Activated CD4-positive, alpha-beta T cell treated with anti-CD3 and anti-CD28 coated beads for 36 hours (primary cell): ENCODE measurements at regions of chr6 and their contacts with region 1.

Region 1: DNA sequence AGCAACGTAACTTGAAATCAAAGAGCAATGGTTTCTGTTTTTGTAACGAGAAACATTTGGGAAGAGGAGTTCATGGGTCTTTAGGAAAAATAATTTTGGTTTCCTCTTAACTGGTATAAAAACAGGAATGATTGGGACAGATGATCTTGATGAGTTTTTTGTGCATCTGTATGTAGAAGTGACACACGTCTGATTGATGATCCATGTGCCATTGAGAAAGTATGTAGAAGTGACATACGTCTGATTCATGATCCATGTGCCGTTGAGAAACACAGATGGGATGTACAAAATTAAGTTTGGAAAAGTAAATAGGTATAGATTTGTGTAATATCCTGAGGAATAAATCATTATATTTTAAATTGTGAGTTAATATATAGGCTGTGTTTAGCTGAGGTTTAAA is 2.1 kb downstream of the KIAA1586 start:
- DNase-seq: no peak
- ATAC-seq: no peak
- H3K4me3 Mint-ChIP-seq: peak overlapping the region; percentile 63
- H3K27ac Mint-ChIP-seq: peak overlapping the region; percentile 40
- H3K4me1 Mint-ChIP-seq: peaks cover 28% of the 10 kb centered on the region
- H3K27me3 Mint-ChIP-seq: peaks cover 9% of the 10 kb centered on the region

Region 2: GRCh38 chr6:57089687-57090460 is 41.3 kb after region 1 on chr6 and contains the start of gene ZNF451:
- CTCF ChIA-PET with region 1: no interaction called
- POLR2A ChIA-PET with region 1: no interaction called
- intact Hi-C with region 1: loop called (anchors 1 kb)
- DNase-seq: peak; percentile 98
- ATAC-seq: peak; percentile 95
- H3K4me3 Mint-ChIP-seq: peak within 1 kb of the TSS; percentile 73
- H3K27ac Mint-ChIP-seq: peak within 1 kb of the TSS; percentile 82
- H3K4me1 Mint-ChIP-seq: peaks cover 32% of the 10 kb centered on the region
- H3K27me3 Mint-ChIP-seq: no peaks in the 10 kb centered on the region
- total RNA-seq, gene ZNF451: 46.8 to 60.3 TPM

Region 3: GRCh38 chr6:57172136-57173055 is 123.8 kb after region 1 on chr6 and contains the start of gene BAG2:
- CTCF ChIA-PET with region 1: no interaction called
- POLR2A ChIA-PET with region 1: no interaction called
- intact Hi-C with region 1: loop called (anchors 1 to 2 kb)
- DNase-seq: peak; percentile 94
- ATAC-seq: peak; percentile 89
- H3K4me3 Mint-ChIP-seq: peak within 1 kb of the TSS; percentile 87
- H3K27ac Mint-ChIP-seq: peak within 1 kb of the TSS; percentile 96
- H3K4me1 Mint-ChIP-seq: peaks cover 35% of the 10 kb centered on the region
- H3K27me3 Mint-ChIP-seq: no peaks in the 10 kb centered on the region
- total RNA-seq, gene BAG2: 8.2 to 8.8 TPM